ENCODE measurements at regions of chr1 and their contacts with region 1.

Region 1: DNA sequence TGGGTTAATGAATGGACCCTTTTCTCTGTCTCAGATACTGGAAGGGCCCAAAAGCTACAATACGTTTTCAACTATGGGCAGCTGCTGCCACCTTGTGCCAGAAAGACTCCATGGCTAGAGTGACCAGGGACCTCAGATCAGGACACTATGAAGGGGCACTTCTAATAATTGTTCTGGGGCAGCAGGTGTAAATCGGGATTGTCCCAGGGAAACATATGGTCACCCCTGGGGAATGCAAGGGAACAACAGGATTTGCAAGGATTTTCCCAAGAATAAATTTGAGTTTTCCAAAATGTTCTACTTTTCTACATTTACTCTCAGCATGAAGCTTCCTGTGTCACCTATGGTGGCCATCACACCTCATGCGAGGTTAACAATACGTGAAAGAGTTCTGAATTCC is 12.0 kb upstream of the FCAMR start:
- DNase-seq: peak; percentile 72
- H3K4me3 Mint-ChIP-seq: no peak overlapping the region
- H3K27ac Mint-ChIP-seq: no peak overlapping the region
- H3K4me1 Mint-ChIP-seq: no peaks in the 10 kb centered on the region
- H3K27me3 Mint-ChIP-seq: peaks cover 15% of the 10 kb centered on the region

Region 2: DNA sequence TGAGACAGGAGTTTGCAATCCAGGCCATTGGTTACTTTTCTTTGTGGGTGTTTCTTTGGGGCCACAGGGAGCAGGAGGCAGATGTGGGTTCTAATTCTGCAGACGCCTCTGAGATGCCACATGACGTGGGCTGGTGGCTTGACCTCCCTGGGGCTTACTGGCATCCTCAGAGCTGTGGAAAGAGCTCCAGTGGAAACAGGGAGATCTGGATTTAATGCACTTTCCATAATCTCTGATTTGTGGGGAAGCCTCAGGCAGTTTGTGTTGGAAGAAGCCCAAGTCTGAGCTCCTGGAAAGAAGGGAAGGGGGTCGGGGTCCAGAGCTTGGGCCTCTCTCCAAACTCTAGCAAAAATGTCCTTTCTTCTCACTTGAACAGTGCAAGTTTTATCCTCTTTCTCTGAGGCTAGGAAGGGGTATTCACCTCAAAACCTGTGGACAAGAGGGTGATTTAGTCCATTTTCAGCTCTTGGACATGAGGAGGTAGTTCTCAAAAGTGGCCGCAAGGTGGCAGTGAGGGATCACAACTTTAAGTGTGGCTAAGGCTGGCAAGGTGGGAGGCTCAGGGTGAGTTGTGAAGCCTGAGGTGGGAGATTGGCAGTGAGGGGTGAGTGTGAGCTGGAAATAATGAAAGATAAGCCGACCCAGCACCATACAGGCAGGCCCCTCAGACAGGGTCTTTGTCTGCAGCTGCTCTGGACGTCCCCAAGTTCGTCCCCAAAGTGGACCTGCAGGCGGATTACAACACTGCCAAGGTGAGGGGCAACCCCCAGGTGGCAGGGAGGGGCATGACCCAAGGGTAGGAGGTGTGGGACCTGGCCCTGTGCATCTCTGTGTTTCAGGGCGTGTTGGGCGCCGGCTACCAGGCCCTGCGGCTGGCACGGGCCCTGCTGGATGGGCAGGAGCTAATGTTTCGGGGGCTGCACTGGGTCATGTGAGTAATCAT is 502.8 kb before region 1 on chr1:
- CTCF ChIA-PET with region 1: interaction called, 11 read pairs
- POLR2A ChIA-PET with region 1: no interaction called
- intact Hi-C with region 1: no loop called
- DNase-seq: peak; percentile 79
- H3K4me3 Mint-ChIP-seq: no peak overlapping the region
- H3K27ac Mint-ChIP-seq: peak overlapping the region; percentile 26
- H3K4me1 Mint-ChIP-seq: peaks cover 37% of the 10 kb centered on the region
- H3K27me3 Mint-ChIP-seq: no peaks in the 10 kb centered on the region

Region 3: GRCh38 chr1:206925106-206925736 is 57.0 kb before region 1 on chr1:
- CTCF ChIA-PET with region 1: interaction called, 39 read pairs
- POLR2A ChIA-PET with region 1: no interaction called
- intact Hi-C with region 1: no loop called
- DNase-seq: peak; percentile 82
- H3K4me3 Mint-ChIP-seq: no peak overlapping the region
- H3K27ac Mint-ChIP-seq: no peak overlapping the region
- H3K4me1 Mint-ChIP-seq: peaks cover 33% of the 10 kb centered on the region
- H3K27me3 Mint-ChIP-seq: no peaks in the 10 kb centered on the region

Region 4: GRCh38 chr1:206955476-206956451 is 26.5 kb before region 1 on chr1:
- CTCF ChIA-PET with region 1: interaction called, 12 read pairs
- POLR2A ChIA-PET with region 1: no interaction called
- intact Hi-C with region 1: no loop called
- DNase-seq: peak; percentile 33
- H3K4me3 Mint-ChIP-seq: no peak overlapping the region
- H3K27ac Mint-ChIP-seq: no peak overlapping the region
- H3K4me1 Mint-ChIP-seq: peaks cover 15% of the 10 kb centered on the region
- H3K27me3 Mint-ChIP-seq: peaks cover 4% of the 10 kb centered on the region

Region 5: DNA sequence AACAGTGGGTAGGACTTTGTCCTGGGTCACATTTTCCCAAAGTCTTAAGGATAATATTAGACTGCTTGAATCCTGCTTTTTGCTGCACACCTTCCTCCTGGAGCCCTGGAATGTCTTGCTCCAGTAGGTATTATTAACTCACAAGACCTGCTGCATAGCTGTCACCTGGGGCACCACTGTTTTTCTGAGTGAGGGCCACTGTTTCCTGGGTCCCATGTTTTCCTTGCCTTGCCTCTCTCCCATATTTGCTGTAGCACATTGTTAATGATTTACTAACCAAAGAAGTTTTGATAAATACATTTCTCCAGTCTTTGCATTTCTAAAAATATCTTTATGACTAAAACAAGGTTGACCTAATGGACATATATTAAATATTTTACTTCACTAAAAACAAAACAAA is 10.6 kb after region 1 on chr1:
- CTCF ChIA-PET with region 1: interaction called, 20 read pairs
- POLR2A ChIA-PET with region 1: no interaction called
- intact Hi-C with region 1: no loop called
- DNase-seq: no peak
- H3K4me3 Mint-ChIP-seq: no peak overlapping the region
- H3K27ac Mint-ChIP-seq: no peak overlapping the region
- H3K4me1 Mint-ChIP-seq: no peaks in the 10 kb centered on the region
- H3K27me3 Mint-ChIP-seq: peaks cover 17% of the 10 kb centered on the region

Measured in activated CD4-positive, alpha-beta memory T cell treated with anti-CD3 and anti-CD28 coated beads for 36 hours (primary cell).